ENCODE measurements at regions of chr7 and their contacts with region 1.

Region 1: DNA sequence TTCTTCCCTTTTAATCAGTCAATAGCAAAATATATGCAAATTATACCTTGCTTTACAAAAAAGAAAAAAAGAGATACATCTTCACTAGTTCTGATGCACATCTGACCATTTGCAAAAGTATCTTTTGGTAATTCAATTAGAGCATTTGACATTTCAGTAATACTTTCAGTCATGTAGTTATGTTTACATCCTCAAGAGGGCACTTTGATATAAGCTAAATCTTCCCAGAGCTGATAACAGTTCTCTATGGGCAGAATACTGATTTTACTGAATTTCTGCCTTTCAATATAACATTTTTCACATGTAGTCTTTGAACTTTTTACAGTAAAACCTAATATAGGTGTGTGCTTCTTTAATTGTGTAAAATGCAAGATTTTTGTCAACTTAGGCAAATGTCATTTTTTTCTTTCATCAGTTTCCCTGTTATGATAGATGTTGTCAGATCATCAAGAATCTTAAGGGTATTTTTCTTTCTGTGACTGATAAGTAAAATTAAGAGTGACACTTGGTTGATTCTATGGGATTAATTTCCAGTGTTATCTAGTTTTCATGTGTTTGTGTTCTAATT is 703.5 kb upstream of the SEMA3D start:
- DNase-seq: no peak

Region 2: DNA sequence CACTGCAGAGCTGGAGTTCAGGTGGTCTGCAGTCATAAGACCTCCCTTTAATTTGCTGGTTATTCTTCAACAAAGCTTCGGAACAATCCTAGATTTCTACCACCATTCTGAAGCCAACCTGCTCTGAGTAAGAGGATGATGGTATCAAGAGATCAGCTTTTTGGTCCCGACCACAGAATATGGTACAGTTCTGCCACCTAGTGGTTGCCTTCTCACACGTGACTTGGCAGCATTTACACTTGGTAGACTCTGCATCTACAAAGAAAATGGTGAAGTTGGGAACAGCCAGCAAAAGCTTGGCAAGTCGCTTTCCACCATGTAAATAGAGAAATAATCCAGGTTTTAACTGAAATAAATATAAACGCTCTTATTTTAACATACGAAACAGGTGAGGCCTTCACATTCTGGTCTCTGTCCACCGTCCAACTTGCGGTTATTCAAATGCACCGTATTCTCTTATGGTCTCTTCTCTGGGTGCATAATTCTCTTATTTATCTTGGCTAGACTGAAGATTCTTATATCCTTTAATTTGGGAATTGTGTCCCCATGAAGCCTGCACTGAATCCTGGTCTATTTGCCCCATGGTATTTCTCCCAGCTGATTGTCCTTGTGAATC is 579.5 kb after region 1 on chr7:
- intact Hi-C with region 1: loop called (anchors 10 kb)
- DNase-seq: peak; percentile 7 to 90 (median 74)

Region 3: DNA sequence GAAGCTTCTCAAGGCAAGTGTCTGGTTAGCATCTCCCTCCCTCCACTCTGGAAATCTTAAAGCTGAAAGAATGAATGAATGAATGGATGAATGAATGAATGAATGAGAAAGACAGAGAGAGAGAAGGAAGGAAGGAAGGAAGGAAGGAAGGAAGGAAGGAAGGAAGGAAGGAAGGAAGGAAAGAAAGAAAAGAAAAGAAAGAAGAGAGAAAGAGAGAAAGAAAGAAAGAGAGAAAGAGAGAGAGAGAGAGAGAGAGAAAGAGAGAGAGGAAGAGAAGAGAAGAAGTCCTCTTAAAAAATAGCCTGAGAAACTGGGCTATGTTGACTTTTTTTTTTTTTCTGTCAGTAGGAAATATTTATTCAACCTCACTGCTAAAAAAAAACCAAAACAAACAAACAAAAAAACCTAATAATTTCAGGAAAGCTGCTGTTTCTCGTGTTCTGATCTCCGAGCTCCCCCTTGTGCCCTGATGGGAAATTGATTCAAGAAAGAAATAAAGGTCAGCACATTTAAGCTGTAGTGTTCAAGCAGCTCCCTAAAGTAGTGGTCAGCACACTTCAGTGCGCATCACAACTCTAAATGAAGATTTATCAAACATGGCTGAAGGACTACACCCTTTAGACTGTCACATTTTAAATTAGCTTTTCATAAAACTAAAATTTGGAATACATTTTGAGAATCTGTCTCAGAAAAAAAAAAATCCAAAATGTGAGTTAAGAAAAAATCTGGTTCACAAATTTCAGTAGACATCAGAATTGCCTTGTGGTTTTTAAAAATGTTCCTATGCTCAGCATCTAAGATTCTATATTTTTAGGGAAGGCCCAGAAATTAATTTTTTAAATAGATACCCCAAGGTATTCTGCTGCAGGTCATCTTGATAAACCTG is 1014.9 kb after region 1 on chr7:
- intact Hi-C with region 1: loop called (anchors 10 kb)
- DNase-seq: peak in 30 of 42 donors; percentile 3 to 76 (median 32)

Measured in head of caudate nucleus (tissue), 42 donors.